ENCODE measurements at regions of chr11 and their contacts with region 1.

Region 1: DNA sequence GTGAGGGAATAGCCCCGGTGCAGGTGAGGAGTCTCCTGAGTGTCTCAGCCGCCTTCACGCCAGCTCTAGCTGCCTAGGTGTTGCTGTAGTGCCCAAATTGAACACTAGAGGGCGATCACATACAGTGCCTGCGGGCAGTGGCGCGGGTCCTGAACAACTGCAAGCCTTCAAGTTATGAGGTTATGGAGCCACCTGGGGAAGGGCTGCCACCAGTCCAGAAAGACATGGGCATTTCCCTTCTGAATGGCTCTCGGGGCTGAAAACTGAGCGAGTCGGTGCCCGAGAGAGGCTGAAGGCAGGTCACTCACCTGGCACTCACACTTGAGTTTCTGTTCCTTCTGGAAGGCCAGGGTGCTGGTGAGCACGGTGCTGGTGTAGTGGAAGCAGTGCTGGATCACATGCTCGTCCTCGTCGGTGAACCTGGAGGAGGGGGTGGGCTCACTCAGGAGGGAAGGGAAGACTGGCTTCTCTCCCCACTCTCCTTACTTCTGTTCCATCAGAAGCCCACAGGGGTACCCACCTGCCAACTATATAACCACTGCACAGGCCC is 88.4 kb downstream of the PDE2A start:
- DNase-seq: peak in 1 of 2 experiments; percentile 66
- H3K4me3 ChIP-seq: no peak overlapping the region
- H3K27ac ChIP-seq: no peak overlapping the region
- H3K4me1 ChIP-seq: no peaks in the 10 kb centered on the region
- H3K27me3 ChIP-seq: no peaks in the 10 kb centered on the region
- CTCF ChIP-seq: peak; percentile 97

Region 2: DNA sequence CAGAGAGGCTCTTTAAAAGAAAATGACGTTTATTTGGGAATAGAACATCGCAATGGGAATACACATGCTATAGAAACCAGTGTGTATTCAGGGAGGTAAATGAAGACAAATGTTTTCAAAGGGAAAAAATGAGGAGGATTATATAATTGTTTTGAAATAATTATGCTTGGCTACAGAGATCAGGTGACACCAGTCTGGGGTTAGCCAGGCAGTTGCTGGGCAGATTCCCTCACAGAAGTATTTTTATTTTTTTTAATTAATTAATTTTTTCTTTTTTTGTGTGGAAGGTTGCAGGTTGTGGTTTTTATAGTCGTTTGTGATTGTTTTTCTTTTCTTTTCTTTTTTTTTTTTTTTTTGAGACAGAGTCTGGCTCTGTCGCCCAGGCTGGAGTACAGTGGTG is 213.6 kb after region 1 on chr11:
- CTCF ChIA-PET with region 1: no interaction called
- POLR2A ChIA-PET with region 1: no interaction called
- intact Hi-C with region 1: no loop called
- DNase-seq: no peak
- H3K4me3 ChIP-seq: no peak overlapping the region
- H3K27ac ChIP-seq: no peak overlapping the region
- H3K4me1 ChIP-seq: peaks cover 9% of the 10 kb centered on the region
- H3K27me3 ChIP-seq: no peaks in the 10 kb centered on the region
- CTCF ChIP-seq: no peak

Region 3: DNA sequence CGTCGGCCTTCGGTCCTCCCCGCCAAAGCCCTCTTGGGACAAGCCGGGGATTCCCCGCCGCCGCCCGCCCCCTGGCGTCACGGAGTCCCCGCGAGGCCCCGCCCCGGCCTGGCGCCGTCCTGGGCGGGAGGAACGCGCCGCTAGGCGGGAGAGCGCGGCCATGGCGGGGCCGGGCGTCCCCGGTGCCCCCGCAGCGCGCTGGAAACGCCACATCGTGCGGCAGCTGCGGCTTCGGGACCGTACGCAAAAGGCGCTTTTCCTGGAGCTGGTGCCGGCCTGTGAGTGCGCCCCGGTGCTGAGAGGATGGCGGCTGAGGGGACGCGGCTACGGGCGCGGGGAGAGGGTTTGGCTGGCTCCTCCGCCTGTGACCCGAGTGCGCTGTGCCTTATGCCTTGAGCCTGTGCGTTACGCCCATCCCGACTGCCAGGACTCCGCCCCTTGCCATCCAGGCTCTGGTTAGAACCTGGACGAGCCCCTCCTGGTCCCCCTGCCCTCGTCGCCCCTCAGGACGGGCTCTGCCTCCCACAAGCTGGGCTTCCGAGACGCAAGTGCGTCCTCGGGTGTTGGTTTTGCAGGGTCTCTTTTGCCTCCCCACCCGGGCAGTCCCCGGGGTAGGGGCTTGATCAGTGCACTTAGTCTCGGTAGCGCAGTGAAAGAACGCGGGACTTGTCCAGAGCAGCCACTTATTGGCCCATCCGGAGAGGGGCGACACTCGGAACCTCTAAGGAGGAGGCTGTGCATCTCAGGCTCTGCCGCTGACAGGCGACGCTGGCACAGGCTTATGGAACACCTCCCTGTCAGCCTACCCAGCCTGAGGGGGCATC is 228.7 kb after region 1 on chr11 and contains the start of gene ATG16L2:
- CTCF ChIA-PET with region 1: no interaction called
- POLR2A ChIA-PET with region 1: no interaction called
- intact Hi-C with region 1: loop called (anchors 10 kb)
- DNase-seq: peak; percentile 76 to 93
- H3K4me3 ChIP-seq: peak within 1 kb of the TSS; percentile 85
- H3K27ac ChIP-seq: peak within 1 kb of the TSS; percentile 74
- H3K4me1 ChIP-seq: peaks cover 39% of the 10 kb centered on the region
- H3K27me3 ChIP-seq: no peaks in the 10 kb centered on the region
- CTCF ChIP-seq: no peak; the same call in 1 of the 2 replicates
- total RNA-seq, gene ATG16L2: 17.5 and 24.0 TPM in 2 replicates

Measured in PC-9 (cell line).